Calu3 (cell line): ENCODE measurements at regions of chr6 and their contacts with region 1.

Region 1: DNA sequence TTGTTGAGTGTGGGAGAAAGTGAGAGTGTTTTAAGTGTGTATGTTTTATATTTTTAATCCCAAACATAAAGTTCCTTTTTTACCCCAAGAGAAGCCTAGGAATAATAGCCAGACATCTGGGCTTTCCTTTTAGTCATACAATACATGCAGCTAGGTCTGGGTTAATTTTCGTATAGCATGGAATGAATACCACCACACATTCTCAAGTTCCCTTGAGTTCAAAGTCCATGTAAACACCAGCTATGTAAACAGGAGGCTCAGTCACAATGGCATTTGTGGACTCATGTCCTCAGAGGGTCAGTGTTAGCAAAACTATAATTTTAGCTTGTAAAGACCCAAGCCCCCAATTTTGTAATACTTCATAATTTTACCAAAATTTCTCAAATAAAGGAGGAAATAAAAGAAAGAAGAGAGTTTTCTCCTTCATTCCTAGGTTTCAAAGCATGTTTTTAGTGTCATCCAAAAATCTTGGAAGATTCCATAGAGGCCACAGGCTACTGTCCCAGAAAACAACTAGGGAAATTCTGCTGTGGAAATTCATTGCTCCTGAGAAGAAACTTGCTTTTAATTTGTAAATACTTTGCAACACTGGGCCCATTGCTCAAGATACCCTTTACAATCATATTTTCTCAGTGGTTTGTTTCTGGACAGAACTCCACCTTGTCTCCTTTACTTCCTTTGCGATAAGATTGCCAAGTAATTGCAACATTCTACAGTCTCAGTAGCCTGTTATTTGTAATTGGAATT is 671.2 kb downstream of the COL12A1 start:
- DNase-seq: peak; percentile 47
- H3K4me3 Mint-ChIP-seq: peak overlapping the region; percentile 50
- H3K27ac Mint-ChIP-seq: peak overlapping the region; percentile 99
- H3K4me1 Mint-ChIP-seq: peaks cover 29% of the 10 kb centered on the region
- H3K27me3 Mint-ChIP-seq: no peaks in the 10 kb centered on the region
- CTCF ChIP-seq: no peak

Region 2: GRCh38 chr6:74447013-74447412 is 87.6 kb before region 1 on chr6:
- CTCF ChIA-PET with region 1: no interaction called
- intact Hi-C with region 1: loop called (anchors 10 kb)
- DNase-seq: no peak
- H3K4me3 Mint-ChIP-seq: no peak overlapping the region
- H3K27ac Mint-ChIP-seq: no peak overlapping the region
- H3K4me1 Mint-ChIP-seq: peaks cover 18% of the 10 kb centered on the region
- H3K27me3 Mint-ChIP-seq: no peaks in the 10 kb centered on the region
- CTCF ChIP-seq: no peak

Region 3: GRCh38 chr6:74467533-74468215 is 67.0 kb before region 1 on chr6:
- CTCF ChIA-PET with region 1: no interaction called
- intact Hi-C with region 1: no loop called
- DNase-seq: no peak
- H3K4me3 Mint-ChIP-seq: no peak overlapping the region
- H3K27ac Mint-ChIP-seq: no peak overlapping the region
- H3K4me1 Mint-ChIP-seq: no peaks in the 10 kb centered on the region
- H3K27me3 Mint-ChIP-seq: no peaks in the 10 kb centered on the region
- CTCF ChIP-seq: no peak

Region 4: DNA sequence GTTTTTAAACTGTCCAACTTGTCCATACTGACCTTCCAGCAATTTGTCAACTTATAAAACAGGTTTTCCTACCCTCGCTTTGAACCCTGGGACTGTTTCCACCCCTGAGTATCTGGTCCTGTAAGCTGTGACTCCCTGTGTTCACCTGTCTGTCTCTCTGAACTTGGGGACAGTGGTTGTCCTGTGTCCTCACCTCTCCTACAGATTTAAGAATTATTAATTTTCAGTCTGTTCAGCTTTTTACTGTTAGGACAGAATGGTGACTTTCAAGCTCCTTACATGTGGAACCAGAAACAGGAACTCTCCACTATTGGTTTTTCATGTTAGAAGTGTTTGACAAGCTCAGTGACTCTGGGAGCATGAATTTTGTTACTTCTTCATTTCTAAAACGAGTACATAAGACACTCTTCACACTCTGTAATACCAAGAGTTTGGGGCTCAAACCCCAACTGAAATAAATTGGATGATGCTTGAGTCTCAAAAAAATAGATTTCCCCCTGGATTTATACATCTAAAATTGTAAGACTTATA is 42.7 kb before region 1 on chr6:
- CTCF ChIA-PET with region 1: no interaction called
- intact Hi-C with region 1: loop called (anchors 5 kb)
- DNase-seq: no peak
- H3K4me3 Mint-ChIP-seq: no peak overlapping the region
- H3K27ac Mint-ChIP-seq: no peak overlapping the region
- H3K4me1 Mint-ChIP-seq: peaks cover 10% of the 10 kb centered on the region
- H3K27me3 Mint-ChIP-seq: no peaks in the 10 kb centered on the region
- CTCF ChIP-seq: no peak

Region 5: DNA sequence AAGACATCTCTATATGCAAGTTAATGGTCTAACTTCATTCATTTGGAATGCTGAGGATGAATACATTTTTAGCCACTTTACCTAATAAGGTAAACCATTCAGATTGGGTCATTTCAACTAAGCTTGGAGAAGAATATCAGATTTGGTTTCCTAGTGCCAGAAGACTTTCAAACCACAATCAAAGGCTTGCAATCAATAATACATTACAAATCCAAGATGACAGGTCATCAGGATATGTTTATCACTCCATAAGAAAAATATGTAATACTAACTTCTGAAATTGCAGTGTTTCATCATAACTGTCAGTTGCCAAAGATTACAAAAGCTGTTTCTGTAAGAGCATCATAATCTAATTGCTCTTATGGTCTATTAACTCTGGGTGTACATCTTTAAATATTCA is 17.3 kb after region 1 on chr6:
- CTCF ChIA-PET with region 1: no interaction called
- intact Hi-C with region 1: no loop called
- DNase-seq: no peak
- H3K4me3 Mint-ChIP-seq: no peak overlapping the region
- H3K27ac Mint-ChIP-seq: no peak overlapping the region
- H3K4me1 Mint-ChIP-seq: no peaks in the 10 kb centered on the region
- H3K27me3 Mint-ChIP-seq: no peaks in the 10 kb centered on the region
- CTCF ChIP-seq: no peak

Region 6: GRCh38 chr6:74574794-74575193 is 40.2 kb after region 1 on chr6:
- CTCF ChIA-PET with region 1: no interaction called
- intact Hi-C with region 1: loop called (anchors 2 kb)
- DNase-seq: peak; percentile 18
- H3K4me3 Mint-ChIP-seq: no peak overlapping the region
- H3K27ac Mint-ChIP-seq: peak overlapping the region; percentile 54
- H3K4me1 Mint-ChIP-seq: peaks cover 18% of the 10 kb centered on the region
- H3K27me3 Mint-ChIP-seq: no peaks in the 10 kb centered on the region
- CTCF ChIP-seq: peak; percentile 71

Region 7: DNA sequence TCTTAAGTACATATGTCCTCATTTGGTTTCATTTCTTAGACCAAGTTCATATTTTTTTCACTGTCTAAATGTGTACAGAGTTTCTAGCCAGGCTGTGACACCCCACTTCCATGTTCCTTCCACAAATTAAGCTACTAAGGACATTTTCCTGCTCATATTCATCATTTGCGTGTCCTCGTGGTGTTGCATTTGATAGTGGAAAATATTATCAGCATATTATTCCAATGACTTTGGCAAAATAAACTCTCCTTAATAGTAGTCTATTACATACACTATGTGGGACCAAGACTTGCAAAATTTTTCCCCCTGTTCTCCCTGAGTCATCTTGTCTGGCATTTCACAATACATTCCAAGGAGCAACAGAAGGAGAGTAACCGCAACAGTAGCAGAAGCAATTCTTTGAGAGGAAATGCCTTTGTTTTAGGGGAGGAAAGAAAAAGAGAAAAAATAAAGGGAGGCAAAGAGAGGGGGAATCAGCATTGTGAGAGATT is 72.0 kb after region 1 on chr6:
- CTCF ChIA-PET with region 1: no interaction called
- intact Hi-C with region 1: loop called (anchors 2 kb)
- DNase-seq: peak; percentile 4
- H3K4me3 Mint-ChIP-seq: no peak overlapping the region
- H3K27ac Mint-ChIP-seq: no peak overlapping the region
- H3K4me1 Mint-ChIP-seq: peaks cover 16% of the 10 kb centered on the region
- H3K27me3 Mint-ChIP-seq: no peaks in the 10 kb centered on the region
- CTCF ChIP-seq: no peak

Region 8: GRCh38 chr6:74731204-74731603 is 196.6 kb after region 1 on chr6:
- CTCF ChIA-PET with region 1: no interaction called
- intact Hi-C with region 1: loop called (anchors 5 kb)
- DNase-seq: peak; percentile 29
- H3K4me3 Mint-ChIP-seq: no peak overlapping the region
- H3K27ac Mint-ChIP-seq: peak overlapping the region; percentile 27
- H3K4me1 Mint-ChIP-seq: peaks cover 10% of the 10 kb centered on the region
- H3K27me3 Mint-ChIP-seq: no peaks in the 10 kb centered on the region
- CTCF ChIP-seq: no peak